IMR-90 (cell line): ENCODE measurements at regions of chr13 and their contacts with region 1.

Region 1: DNA sequence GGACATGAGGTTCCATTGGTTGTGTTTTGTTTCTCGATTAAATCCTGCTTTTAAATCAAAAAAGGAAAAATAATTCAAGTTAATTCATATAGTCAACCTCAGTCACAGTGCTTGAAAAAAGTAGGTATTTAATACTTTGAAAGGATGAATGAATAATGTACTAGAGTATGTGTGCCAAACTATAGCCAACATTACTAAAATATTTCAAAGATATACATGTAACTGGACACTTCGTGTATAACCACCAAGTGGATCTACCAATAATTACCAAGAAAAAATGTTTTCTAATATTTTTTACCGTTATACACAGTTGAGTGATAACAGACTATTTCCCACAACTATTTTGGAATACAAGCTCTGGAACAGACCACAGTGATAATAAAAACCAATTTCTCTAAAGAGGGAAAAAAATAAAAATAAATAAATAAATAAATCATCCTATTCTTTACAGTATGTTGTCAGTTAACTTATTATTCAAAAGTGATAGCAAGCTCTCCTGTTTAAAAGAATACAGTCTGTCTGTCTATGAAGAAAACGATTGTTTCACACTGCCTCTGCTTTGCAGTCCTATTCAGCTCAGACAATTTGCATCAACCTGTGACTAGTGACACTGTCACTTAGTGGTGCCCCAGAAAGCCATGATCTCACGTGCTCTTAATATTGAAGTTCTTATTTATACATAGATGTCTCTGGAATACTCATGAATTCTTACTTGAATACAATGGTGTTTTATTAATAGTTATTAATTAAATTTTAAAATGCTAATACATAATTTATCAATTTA is 58.2 kb downstream of the UBL3 start:
- DNase-seq: peak; percentile 69
- ATAC-seq: peak; percentile 92
- H3K4me3 ChIP-seq: no peak overlapping the region
- H3K27ac ChIP-seq: no peak overlapping the region
- H3K4me1 ChIP-seq: peaks cover 2% of the 10 kb centered on the region; the same call in 1 of the 2 replicates
- H3K27me3 ChIP-seq: no peaks in the 10 kb centered on the region
- CTCF ChIP-seq: no peak
- POLR2A ChIP-seq: no peak
- RAD21 ChIP-seq: no peak

Region 2: DNA sequence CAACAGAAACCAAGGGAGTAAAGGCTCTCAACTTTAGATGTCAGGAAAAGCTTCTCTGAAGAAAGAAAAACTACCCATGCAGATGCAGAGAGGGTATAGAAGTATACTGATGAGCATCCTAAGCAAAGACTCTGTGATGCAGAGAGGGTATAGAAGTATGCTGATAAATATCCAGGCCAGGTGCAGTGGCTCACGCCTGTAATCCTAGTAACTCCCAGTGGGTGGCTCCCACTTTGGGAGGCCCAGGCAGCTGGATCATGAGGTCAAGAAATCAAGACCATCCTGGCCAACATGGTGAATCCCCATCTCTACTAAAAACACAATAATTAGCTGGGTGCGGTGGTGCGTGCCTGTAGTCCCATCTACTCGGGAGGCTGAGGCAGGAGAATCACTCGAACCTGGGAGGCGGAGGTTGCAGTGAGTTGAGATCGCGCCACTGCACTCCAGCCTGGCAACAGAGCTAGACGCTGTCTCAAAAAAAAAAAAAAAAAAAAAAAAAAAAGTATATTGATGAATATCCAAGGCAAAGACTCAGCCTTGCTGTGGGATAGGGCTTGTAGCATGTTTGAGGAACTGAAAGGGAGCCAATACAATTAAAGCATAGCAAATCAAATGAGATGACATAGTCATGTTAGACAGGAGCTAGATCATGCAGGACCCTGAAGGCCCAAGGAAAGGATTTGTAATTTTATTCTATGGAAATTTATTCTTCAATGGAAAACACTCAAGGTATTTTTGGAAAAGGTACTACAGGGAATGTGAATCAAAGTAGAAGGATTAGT is 43.3 kb after region 1 on chr13:
- CTCF ChIA-PET with region 1: no interaction called
- POLR2A ChIA-PET with region 1: no interaction called
- dilution Hi-C with region 1: no loop called
- in situ Hi-C with region 1: no loop called
- intact Hi-C with region 1: loop called (anchors 5 kb)
- DNase-seq: no peak
- ATAC-seq: no peak
- H3K4me3 ChIP-seq: no peak overlapping the region
- H3K27ac ChIP-seq: no peak overlapping the region
- H3K4me1 ChIP-seq: no peaks in the 10 kb centered on the region; the same call in 1 of the 2 replicates
- H3K27me3 ChIP-seq: no peaks in the 10 kb centered on the region
- CTCF ChIP-seq: no peak
- POLR2A ChIP-seq: no peak
- RAD21 ChIP-seq: no peak